PC-9 (cell line): ENCODE measurements at regions of chr6 and their contacts with region 1.

Region 1: GRCh38 chr6:16684896-16685554 is 76.2 kb downstream of the ATXN1 start:
- DNase-seq: no peak
- H3K4me3 ChIP-seq: no peak overlapping the region
- H3K27ac ChIP-seq: peak overlapping the region; percentile 88
- H3K4me1 ChIP-seq: peaks cover 64% of the 10 kb centered on the region
- H3K27me3 ChIP-seq: no peaks in the 10 kb centered on the region
- CTCF ChIP-seq: no peak

Region 2: GRCh38 chr6:16635810-16636602 is 49.0 kb before region 1 on chr6:
- CTCF ChIA-PET with region 1: no interaction called
- POLR2A ChIA-PET with region 1: no interaction called
- intact Hi-C with region 1: loop called (anchors 2 kb)
- DNase-seq: peak; percentile 75 to 81
- H3K4me3 ChIP-seq: no peak overlapping the region
- H3K27ac ChIP-seq: peak overlapping the region; percentile 74
- H3K4me1 ChIP-seq: peaks cover 28% of the 10 kb centered on the region
- H3K27me3 ChIP-seq: no peaks in the 10 kb centered on the region
- CTCF ChIP-seq: no peak

Region 3: GRCh38 chr6:16670183-16670582 is 14.8 kb before region 1 on chr6:
- CTCF ChIA-PET with region 1: no interaction called
- POLR2A ChIA-PET with region 1: interaction called, 14 read pairs
- intact Hi-C with region 1: no loop called
- DNase-seq: peak in 1 of 2 experiments; percentile 45
- H3K4me3 ChIP-seq: no peak overlapping the region
- H3K27ac ChIP-seq: peak overlapping the region; percentile 82
- H3K4me1 ChIP-seq: peaks cover 44% of the 10 kb centered on the region
- H3K27me3 ChIP-seq: no peaks in the 10 kb centered on the region
- CTCF ChIP-seq: no peak